PC-3 (cell line): ENCODE measurements at regions of chr9 and their contacts with region 1.

Region 1: DNA sequence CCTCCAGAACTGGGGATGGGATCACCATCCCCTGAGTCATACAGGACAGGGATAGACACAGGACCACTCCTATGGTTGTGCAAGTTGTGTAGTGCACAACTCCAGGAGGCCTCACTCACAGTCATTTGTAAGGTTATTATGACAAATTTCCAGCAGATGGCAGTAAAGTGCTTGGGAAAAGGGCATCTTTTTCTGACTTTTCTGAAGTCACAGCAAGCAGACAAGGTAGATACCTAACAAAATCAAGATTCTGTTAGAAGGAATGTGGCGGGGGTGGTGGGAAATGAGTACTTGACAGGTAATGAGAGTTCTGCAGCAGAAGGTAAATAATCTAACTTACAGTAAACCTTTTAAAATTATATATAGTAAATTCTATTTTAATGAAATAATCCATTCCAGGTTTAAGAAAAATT is 16.7 kb upstream of the KIF27 start:
- DNase-seq: peak; percentile 87
- ATAC-seq: peak; percentile 61
- H3K4me3 ChIP-seq: no peak overlapping the region
- H3K27ac ChIP-seq: no peak overlapping the region
- H3K4me1 ChIP-seq: peaks cover 20% of the 10 kb centered on the region
- H3K27me3 ChIP-seq: no peaks in the 10 kb centered on the region
- CTCF ChIP-seq: peak; percentile 72

Region 2: DNA sequence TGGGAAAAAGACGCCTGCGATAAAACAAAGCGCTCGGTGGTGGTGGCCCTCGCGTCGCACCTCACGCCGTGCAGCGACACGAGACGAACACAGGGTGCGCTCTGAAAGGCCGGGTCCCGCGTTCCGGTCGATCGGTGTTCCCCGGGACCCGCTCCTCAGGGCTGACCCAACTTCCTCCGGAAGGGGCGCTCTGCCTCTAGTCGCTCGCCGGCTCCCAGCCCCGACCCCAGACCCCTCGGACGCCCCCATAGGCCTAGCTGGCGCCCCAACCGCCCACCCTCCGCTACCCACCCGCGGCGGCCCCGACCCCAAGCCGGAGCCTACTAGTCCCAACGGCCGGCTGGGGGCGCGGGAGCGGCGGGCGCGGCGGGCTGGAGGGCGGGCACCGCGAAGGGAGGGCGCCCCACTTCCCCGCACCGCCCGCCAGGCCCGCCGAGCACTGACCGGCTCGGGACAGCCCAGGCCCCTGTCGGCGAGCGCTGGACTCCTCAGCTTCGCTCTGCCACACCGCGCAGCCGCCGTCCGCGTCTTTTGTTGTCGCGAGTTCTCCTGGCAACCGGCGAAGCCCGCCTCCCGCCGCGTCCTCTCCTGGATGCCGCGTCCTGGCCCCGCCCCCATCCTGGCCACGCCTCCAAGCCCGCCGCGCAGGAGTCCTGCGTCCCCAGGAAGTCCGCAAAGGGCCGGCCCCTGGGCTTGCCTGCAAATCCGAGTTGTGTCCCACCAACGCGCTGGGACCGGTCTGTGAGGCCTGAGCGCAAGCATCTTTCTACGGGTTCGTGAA is 16.8 kb before region 1 on chr9 and contains the start of gene KIF27:
- CTCF ChIA-PET with region 1: no interaction called
- POLR2A ChIA-PET with region 1: interaction called, 4 read pairs
- intact Hi-C with region 1: loop called (anchors 2 kb)
- DNase-seq: peak; percentile 93
- ATAC-seq: peak; percentile 95
- H3K4me3 ChIP-seq: peak within 1 kb of the TSS; percentile 57
- H3K27ac ChIP-seq: peak within 1 kb of the TSS; percentile 59
- H3K4me1 ChIP-seq: peaks cover 9% of the 10 kb centered on the region
- H3K27me3 ChIP-seq: no peaks in the 10 kb centered on the region
- CTCF ChIP-seq: peak; percentile 46; the same call in 1 of the 2 replicates
- total RNA-seq, gene KIF27: 2.2 and 3.2 TPM in 2 replicates

Region 3: DNA sequence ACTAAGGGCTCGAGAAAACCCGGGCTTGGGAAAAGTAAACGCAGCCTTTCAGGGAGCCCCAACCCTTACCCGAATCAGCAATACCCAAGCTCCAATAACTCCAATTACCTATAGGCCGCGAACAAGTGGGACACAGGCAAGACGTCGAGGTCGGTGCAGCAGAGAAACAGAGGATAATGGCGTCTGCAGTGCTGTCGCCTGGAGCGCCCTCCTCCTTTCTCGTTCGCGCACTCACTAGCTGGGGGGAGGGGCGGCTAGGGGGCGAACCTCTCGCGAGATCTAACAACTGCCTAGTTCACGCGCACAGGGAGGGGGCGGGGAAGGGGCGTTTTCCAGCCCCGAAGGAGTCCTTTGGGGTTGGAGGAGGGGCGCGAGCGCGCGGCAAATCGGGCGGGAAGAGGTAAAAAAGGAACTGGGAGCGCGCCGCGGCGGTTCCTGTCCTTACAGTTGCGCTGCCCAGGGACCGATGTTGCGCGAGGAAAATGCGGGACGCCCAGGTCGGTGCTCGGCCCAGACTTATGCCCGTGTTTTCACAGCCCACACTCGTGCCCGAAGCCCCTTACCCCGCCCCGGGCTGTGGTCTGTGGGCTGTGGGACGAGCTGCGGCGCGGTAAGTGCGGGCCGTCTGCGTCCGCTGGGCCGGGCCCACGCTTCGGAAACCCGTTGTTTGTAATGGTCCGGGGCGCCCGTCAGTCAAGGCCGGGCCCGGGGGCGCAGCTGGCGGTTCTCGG is 42.6 kb after region 1 on chr9 and contains the start of gene RMI1:
- CTCF ChIA-PET with region 1: no interaction called
- POLR2A ChIA-PET with region 1: no interaction called
- intact Hi-C with region 1: loop called (anchors 5 kb)
- DNase-seq: peak; percentile 95
- ATAC-seq: peak; percentile 75
- H3K4me3 ChIP-seq: peak within 1 kb of the TSS; percentile 94
- H3K27ac ChIP-seq: peak within 1 kb of the TSS; percentile 94
- H3K4me1 ChIP-seq: peaks cover 21% of the 10 kb centered on the region
- H3K27me3 ChIP-seq: no peaks in the 10 kb centered on the region
- CTCF ChIP-seq: no peak; the same call in 1 of the 2 replicates
- total RNA-seq, gene RMI1: 5.0 and 6.2 TPM in 2 replicates

Region 4: DNA sequence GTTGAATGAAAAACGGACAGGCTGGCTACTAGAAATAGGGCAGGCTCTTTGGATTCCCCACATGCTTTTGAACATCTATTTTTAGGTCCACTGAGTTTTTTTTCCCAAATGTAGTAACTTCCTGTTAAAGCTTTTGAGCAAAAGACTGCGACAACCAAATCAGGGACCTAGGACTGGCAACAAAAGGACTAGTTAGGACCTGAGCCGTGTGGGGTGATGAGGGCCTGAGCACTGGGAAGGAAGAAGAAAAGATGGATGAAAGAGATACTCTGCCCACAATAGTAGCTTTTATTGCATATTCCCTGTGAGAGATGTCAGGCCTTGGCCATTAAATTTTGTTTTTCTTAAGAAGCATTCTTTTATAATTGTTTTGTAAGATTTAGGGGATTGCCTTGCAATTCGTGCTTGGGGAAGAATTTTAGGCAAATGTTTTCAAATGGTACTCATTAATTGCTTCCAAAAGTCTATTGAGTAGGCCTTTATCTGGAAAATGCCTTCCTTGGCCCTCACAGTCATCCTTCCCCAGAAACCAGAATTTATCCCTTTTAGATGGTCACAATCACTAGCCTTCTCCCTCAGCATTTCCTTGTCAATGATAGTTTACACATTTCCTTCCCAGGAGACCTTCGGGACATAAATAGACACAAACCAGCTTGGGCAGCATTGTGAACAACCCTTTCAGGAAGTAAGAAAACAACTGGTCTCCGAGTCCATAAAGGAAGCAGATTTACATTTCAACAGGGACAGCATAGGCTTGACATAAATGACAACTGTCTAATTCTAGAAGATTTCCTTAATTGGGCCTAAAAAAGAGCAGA is 209.2 kb after region 1 on chr9:
- CTCF ChIA-PET with region 1: interaction called, 23 read pairs
- POLR2A ChIA-PET with region 1: no interaction called
- intact Hi-C with region 1: no loop called
- DNase-seq: no peak
- ATAC-seq: no peak
- H3K4me3 ChIP-seq: no peak overlapping the region
- H3K27ac ChIP-seq: no peak overlapping the region
- H3K4me1 ChIP-seq: no peaks in the 10 kb centered on the region
- H3K27me3 ChIP-seq: peaks cover 5% of the 10 kb centered on the region; the same call in 1 of the 2 replicates
- CTCF ChIP-seq: no peak

Region 5: DNA sequence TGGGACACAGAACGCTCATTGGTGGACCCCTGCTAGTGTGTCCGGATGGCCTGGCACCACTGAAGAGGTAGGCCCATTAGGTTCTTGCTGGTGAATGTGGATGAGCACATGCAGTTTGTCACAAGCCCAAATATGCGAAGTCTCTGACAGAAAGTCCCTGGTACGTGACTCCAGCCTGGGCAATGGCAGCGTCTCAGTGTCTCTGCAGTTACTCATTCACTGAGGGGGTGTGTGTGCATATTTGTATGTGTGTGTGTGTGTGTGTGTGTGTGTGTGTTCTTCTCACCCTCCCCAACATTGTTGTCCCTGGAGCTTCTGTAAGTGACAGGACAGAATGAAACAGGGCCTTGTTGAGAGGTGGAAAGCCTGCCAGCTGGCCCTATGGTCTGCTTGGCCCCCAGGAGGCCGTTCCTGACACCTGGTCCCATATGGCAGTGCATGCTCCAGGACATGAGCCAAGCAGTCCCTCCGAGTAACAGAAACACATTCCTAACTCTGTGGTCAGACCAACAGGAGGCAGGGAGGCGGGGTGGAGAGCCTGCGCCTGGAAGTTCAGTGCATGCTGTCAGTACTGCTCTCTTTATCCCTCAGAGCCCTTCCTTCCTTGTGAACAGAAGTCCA is 232.7 kb after region 1 on chr9:
- CTCF ChIA-PET with region 1: interaction called, 10 read pairs
- POLR2A ChIA-PET with region 1: no interaction called
- intact Hi-C with region 1: loop called (anchors 1 kb)
- DNase-seq: peak; percentile 36
- ATAC-seq: peak; percentile 33; the same call in 1 of the 2 replicates
- H3K4me3 ChIP-seq: no peak overlapping the region
- H3K27ac ChIP-seq: no peak overlapping the region
- H3K4me1 ChIP-seq: peaks cover 3% of the 10 kb centered on the region; the same call in 1 of the 2 replicates
- H3K27me3 ChIP-seq: 0 out of 2 replicates have a peak, but pooled peaks cover 4% of the 10 kb centered on the region
- CTCF ChIP-seq: no peak

Region 6: DNA sequence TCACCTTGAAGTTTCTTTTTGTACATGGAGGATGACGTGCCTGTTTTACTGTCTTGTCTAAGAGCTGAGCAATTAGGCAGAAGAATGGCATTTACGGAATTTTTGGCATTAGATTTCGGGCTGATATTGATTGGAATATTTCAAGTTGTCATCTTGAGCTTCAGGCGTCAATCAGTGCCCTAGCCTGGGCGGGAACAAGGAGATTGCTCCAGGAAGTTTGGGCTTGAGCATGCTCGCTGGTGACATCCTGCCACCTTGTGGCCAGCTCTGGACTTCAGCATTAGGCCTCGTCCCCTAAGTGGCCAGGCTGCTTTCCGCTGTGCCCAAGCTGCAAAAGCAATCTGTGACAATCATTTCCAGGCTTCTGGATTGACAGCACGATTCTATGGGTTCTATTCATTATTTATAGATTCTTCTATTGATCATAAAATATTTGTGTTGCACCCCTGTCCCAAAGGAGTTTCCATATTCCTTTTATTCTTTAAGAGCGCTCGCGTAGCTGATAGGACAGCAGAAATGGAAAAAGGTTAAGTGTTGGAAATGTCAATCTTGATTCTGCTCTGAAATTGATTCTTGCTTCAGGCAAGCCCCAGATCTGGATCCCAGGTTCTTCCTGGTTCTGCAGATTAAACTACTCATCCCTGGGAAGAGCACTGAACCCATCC is 323.3 kb after region 1 on chr9:
- CTCF ChIA-PET with region 1: no interaction called
- POLR2A ChIA-PET with region 1: no interaction called
- intact Hi-C with region 1: loop called (anchors 1 kb)
- DNase-seq: peak; percentile 80
- ATAC-seq: peak; percentile 97
- H3K4me3 ChIP-seq: no peak overlapping the region
- H3K27ac ChIP-seq: no peak overlapping the region
- H3K4me1 ChIP-seq: no peaks in the 10 kb centered on the region
- H3K27me3 ChIP-seq: 0 out of 2 replicates have a peak, but pooled peaks cover 5% of the 10 kb centered on the region
- CTCF ChIP-seq: peak; percentile 86

Region 7: DNA sequence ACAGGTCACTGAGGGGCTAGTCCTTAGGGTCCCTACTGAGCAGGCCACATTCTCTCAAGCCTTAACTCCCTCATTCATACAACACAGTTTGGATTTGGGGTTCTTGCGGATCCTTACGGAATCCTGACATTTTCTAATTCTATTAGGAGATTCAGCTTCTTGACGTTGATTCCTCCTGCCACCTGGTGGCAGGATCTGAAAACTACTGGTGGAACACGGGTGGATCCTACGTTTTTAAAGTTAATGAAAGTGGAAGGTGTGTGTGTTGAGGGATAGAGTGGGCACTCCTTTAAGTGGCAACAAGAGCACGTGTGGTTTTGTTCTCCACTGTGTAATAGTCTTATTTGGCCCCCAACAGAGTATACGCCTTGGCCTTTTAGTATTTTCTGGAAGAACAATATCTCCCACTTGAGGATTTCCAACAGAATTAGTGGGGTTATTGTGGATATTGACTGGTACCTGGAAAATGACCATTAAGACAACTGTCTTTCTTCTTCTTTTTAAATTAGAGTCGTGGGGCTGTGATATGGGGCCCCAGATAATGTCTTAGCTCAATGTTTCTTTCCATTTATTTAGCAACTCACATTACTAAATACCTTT is 377.5 kb after region 1 on chr9:
- CTCF ChIA-PET with region 1: no interaction called
- POLR2A ChIA-PET with region 1: no interaction called
- intact Hi-C with region 1: loop called (anchors 2 kb)
- DNase-seq: peak; percentile 76
- ATAC-seq: peak; percentile 74
- H3K4me3 ChIP-seq: peak overlapping the region; percentile 33; the same call in 1 of the 2 replicates
- H3K27ac ChIP-seq: no peak overlapping the region
- H3K4me1 ChIP-seq: no peaks in the 10 kb centered on the region
- H3K27me3 ChIP-seq: no peaks in the 10 kb centered on the region
- CTCF ChIP-seq: peak; percentile 75